ENCODE measurements at regions of chr7 and their contacts with region 1.

Region 1: GRCh38 chr7:77696198-77697028 is at the start of gene RSBN1L:
- DNase-seq: peak; percentile 98 to 100 (median 98)
- ATAC-seq: peak; percentile 93
- H3K4me3 ChIP-seq: peak within 1 kb of the TSS; percentile 93
- H3K27ac ChIP-seq: peak within 1 kb of the TSS; percentile 88
- H3K4me1 ChIP-seq: peaks cover 17 to 19% of the 10 kb centered on the region in 2 experiments; a peak in 4 of 5 replicates
- H3K27me3 ChIP-seq: no peaks in the 10 kb centered on the region
- CTCF ChIP-seq: peak; percentile 40 to 44 (median 43); a peak in 3 of 6 replicates
- EP300 ChIP-seq: no peak
- POLR2A ChIP-seq: peak; percentile 95
- RAD21 ChIP-seq: no peak
- polyA plus RNA-seq, gene RSBN1L: 6.2 to 8.3 TPM

Region 2: DNA sequence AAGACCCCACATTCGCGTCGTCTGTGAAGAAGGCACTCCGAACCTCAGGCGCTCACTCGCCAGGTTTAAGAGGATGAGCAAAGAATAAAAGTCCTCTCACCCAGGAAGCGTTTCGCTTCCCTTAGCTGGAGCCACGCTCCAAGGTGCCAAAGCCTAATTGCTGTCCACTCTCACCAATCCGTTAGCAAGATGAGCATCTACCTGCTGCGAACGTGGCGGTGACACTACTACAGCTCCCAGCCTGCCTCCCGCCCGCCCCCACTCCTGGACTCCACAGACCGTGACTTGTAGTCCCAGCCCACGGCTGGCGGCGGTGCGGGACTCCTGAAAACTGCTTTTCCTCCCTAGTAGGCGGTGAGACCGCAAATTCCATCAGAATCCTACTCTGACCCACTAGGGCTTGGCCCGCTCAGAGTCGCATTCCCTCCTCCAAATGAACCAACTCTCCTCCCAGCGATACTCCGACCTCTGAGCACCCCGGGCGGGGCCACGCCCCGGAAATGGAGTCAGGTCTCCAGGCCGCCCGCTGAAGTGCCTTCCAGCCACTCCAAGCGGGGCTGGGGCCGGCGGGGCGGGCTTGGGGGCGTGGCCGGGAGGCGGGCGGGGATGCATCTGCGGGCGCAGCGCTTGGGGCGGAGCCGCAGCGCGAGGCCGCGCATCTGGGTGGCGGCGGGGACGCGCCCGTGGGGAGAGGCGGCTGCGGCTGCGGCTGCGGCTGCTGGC is 159.8 kb before region 1 on chr7:
- CTCF ChIA-PET with region 1: no interaction called
- POLR2A ChIA-PET with region 1: interaction called, 4 read pairs
- in situ Hi-C with region 1: no loop called
- intact Hi-C with region 1: loop called (anchors 5 kb)
- DNase-seq: peak; percentile 98 to 99 (median 99)
- ATAC-seq: peak; percentile 93
- H3K4me3 ChIP-seq: peak overlapping the region; percentile 80
- H3K27ac ChIP-seq: peak overlapping the region; percentile 88
- H3K4me1 ChIP-seq: peaks cover 10 to 21% of the 10 kb centered on the region in 2 experiments
- H3K27me3 ChIP-seq: no peaks in the 10 kb centered on the region
- CTCF ChIP-seq: no peak
- EP300 ChIP-seq: no peak
- POLR2A ChIP-seq: peak; percentile 98
- RAD21 ChIP-seq: peak in 1 of 2 experiments; percentile 8; a peak in 1 of 4 replicates

Region 3: DNA sequence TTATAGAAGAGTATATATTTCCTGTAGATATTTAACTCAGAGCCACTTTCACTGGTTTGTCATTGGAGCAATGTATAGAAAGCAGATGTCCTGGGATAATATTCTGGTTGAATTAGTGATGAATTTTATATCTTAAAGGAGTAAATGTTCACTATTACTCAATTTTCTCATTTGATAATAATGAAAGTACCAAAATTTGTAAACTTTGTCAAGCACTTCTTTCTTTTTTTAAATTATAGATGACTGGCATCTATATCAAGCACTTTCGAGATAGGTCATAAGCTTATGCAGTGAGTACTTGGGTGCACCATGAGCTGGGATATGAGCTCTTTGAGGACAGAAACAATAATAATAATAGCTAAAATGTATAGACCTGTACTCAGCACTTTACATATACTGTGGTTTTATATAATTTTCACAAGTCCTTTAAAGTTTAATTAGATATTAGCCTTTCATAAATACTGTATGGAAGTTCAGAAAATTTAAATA is 11.1 kb after region 1 on chr7:
- CTCF ChIA-PET with region 1: no interaction called
- POLR2A ChIA-PET with region 1: interaction called, 16 read pairs
- in situ Hi-C with region 1: no loop called
- intact Hi-C with region 1: no loop called
- DNase-seq: no peak
- ATAC-seq: no peak
- H3K4me3 ChIP-seq: no peak overlapping the region
- H3K27ac ChIP-seq: no peak overlapping the region
- H3K4me1 ChIP-seq: peaks cover 11 to 30% of the 10 kb centered on the region in 2 experiments
- H3K27me3 ChIP-seq: no peaks in the 10 kb centered on the region
- CTCF ChIP-seq: no peak
- EP300 ChIP-seq: no peak
- POLR2A ChIP-seq: no peak
- RAD21 ChIP-seq: no peak

Region 4: GRCh38 chr7:77734659-77735421 is 38.4 kb after region 1 on chr7:
- CTCF ChIA-PET with region 1: no interaction called
- POLR2A ChIA-PET with region 1: interaction called, 3 read pairs
- in situ Hi-C with region 1: no loop called
- intact Hi-C with region 1: loop called (anchors 5 kb)
- DNase-seq: peak in 2 of 4 experiments; percentile 24 to 66
- ATAC-seq: peak; percentile 69
- H3K4me3 ChIP-seq: no peak overlapping the region
- H3K27ac ChIP-seq: peak overlapping the region; percentile 42; the same call in 1 of the 3 replicates
- H3K4me1 ChIP-seq: peaks cover 6 to 17% of the 10 kb centered on the region in 2 experiments; a peak in 4 of 5 replicates
- H3K27me3 ChIP-seq: no peaks in the 10 kb centered on the region
- CTCF ChIP-seq: no peak
- EP300 ChIP-seq: no peak
- POLR2A ChIP-seq: no peak
- RAD21 ChIP-seq: no peak

Region 5: DNA sequence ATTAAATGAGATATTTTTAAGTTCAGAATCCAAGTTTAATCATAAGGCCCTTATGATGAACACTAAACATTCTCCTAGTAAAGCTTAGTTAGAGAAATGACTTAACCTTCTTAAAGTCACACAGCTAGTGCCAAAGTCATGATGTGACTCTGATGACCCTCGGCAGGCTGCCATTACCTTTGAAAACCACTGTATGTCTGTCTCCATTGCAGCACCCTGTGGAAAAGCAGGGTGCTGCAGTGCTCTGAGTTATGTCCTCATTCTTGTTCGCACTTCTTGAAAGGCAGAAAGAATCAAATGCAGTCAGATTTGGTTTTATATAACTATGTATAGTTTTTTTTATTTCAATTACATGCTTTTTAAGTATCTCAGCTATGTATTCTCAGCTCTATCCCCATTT is 207.2 kb after region 1 on chr7:
- CTCF ChIA-PET with region 1: no interaction called
- POLR2A ChIA-PET with region 1: no interaction called
- in situ Hi-C with region 1: no loop called
- intact Hi-C with region 1: loop called (anchors 5 kb)
- DNase-seq: peak in 2 of 4 experiments; percentile 62 to 73
- ATAC-seq: peak; percentile 88
- H3K4me3 ChIP-seq: no peak overlapping the region
- H3K27ac ChIP-seq: no peak overlapping the region
- H3K4me1 ChIP-seq: peaks cover 5 to 16% of the 10 kb centered on the region in 2 experiments; a peak in 3 of 5 replicates
- H3K27me3 ChIP-seq: no peaks in the 10 kb centered on the region
- CTCF ChIP-seq: peak; percentile 56 to 73 (median 68)
- EP300 ChIP-seq: no peak
- POLR2A ChIP-seq: no peak
- RAD21 ChIP-seq: peak; percentile 42 to 72

Measured in K562 (cell line).